Dorsolateral prefrontal cortex (tissue), 120 donors: ENCODE measurements at regions of chr5 and their contacts with region 1.

Region 1: DNA sequence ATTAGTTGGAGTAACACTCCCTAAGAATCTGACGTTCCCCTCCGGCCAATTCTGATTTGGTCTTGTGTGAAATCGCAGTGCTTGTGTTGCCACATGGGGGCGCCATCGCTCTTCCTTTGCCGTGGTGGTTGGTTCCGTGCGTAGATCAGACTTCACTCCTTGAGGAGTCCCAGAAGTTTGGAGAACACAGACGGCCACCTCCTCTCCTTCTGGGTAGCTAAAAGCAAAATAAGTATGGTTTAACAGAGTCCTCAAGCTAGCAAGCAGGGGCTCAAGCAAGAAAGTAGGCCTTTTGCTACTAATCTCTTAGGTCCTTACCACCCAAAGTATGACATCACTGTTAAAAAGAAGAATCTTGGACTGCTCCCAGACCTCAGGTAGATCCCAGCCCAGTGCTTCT is 59.5 kb downstream of the HSPA4 start:
- DNase-seq: peak; percentile 73 to 92 (median 86)
- H3K4me3 ChIP-seq: peak overlapping the region in 1 of 59 donors; percentile 8
- H3K27ac ChIP-seq: no peak overlapping the region
- H3K27me3 ChIP-seq: no peaks in the 10 kb centered on the region
- CTCF ChIP-seq: peak; percentile 85 to 98 (median 93)

Region 2: GRCh38 chr5:133240425-133241091 is 129.3 kb after region 1 on chr5:
- intact Hi-C with region 1: loop called in 1 of 2 experiments (anchors 10 kb)
- DNase-seq: peak in 5 of 10 donors; percentile 41 to 69 (median 58)
- H3K4me3 ChIP-seq: no peak overlapping the region
- H3K27ac ChIP-seq: peak overlapping the region in 26 of 59 donors; percentile 3 to 75 (median 40)
- H3K27me3 ChIP-seq: no peaks in the 10 kb centered on the region
- CTCF ChIP-seq: no peak

Region 3: DNA sequence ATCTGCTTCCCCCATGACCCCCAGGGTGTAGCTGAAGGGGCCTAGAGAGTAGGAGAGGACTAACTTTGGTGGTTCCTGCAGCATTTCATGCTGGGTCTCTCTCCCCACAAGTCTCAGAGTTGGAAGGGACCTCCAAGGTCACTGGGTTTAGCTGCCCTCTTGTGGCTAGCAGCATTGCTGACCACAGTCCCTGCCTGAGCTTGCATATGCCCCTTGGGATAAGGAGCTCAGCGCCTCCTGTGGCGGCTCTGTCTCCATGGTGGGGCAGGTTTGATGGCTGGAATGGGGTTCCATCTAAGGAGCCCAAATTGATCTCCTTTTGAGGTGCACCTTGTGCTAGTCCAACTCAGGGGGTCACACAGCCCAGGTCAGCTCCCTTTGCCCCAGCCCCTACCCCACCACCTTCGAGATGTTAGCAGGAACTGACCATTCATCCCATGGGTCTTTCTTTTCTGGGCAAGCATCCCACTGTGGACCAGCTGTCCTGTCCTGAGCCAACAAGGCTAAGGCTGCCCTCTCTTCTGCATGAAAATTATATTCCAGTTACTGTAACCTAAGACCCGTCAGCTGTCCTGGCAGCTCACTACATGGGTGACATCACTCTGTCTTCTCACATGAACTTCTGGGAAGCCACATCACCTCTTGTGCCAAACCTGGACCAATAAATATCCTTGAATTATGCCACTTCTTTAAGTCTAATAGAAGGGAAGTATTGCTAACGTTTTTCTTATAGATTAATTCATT is 136.8 kb after region 1 on chr5:
- intact Hi-C with region 1: loop called (anchors 2 to 10 kb)
- DNase-seq: peak in 1 of 10 donors; percentile 23
- H3K4me3 ChIP-seq: no peak overlapping the region
- H3K27ac ChIP-seq: peak overlapping the region in 1 of 59 donors; percentile 9
- H3K27me3 ChIP-seq: no peaks in the 10 kb centered on the region
- CTCF ChIP-seq: peak in 47 of 56 donors; percentile 9 to 60 (median 37)

Region 4: GRCh38 chr5:133610489-133611356 is 499.4 kb after region 1 on chr5:
- intact Hi-C with region 1: loop called in 1 of 2 experiments (anchors 5 kb)
- DNase-seq: peak in 9 of 10 donors; percentile 44 to 82 (median 64)
- H3K4me3 ChIP-seq: peak overlapping the region; percentile 37 to 76 (median 61)
- H3K27ac ChIP-seq: peak overlapping the region in 25 of 59 donors; percentile 10 to 80 (median 65)
- H3K27me3 ChIP-seq: peaks cover 0 to 68% (median 17%) of the 10 kb centered on the region in 45 donors
- CTCF ChIP-seq: peak in 55 of 56 donors; percentile 10 to 79 (median 63)

Region 5: DNA sequence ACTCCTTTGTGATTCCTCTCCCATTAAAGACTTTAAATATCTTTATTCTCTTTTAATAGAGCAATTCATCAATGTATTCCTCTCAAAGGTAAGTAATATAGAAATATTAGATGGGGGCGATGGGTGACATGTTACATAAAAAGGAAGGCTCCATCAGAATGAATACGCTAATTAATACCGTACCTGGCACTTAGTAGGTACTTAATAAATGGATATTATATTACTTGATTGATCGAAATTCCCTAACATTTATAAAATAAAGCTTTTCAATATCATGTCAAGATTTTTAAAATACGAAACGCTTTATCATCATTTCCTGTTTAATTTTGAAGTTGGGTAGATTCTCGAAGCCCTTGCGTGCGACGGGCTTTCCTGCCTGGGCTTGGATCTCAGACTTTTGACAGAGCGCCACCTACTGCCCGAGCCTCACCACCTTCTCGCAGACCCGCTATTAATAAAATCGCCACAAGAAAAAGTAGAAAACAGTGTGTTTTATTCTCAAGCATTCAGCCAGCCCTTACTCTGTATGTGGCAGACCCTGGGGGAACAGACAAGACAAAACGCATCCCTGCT is 757.7 kb after region 1 on chr5:
- intact Hi-C with region 1: loop called (anchors 2 to 10 kb)
- DNase-seq: peak; percentile 73 to 83 (median 78)
- H3K4me3 ChIP-seq: peak overlapping the region in 57 of 59 donors; percentile 8 to 68 (median 45)
- H3K27ac ChIP-seq: peak overlapping the region in 37 of 59 donors; percentile 5 to 84 (median 53)
- H3K27me3 ChIP-seq: no peaks in the 10 kb centered on the region
- CTCF ChIP-seq: peak; percentile 55 to 91 (median 82)

Region 6: DNA sequence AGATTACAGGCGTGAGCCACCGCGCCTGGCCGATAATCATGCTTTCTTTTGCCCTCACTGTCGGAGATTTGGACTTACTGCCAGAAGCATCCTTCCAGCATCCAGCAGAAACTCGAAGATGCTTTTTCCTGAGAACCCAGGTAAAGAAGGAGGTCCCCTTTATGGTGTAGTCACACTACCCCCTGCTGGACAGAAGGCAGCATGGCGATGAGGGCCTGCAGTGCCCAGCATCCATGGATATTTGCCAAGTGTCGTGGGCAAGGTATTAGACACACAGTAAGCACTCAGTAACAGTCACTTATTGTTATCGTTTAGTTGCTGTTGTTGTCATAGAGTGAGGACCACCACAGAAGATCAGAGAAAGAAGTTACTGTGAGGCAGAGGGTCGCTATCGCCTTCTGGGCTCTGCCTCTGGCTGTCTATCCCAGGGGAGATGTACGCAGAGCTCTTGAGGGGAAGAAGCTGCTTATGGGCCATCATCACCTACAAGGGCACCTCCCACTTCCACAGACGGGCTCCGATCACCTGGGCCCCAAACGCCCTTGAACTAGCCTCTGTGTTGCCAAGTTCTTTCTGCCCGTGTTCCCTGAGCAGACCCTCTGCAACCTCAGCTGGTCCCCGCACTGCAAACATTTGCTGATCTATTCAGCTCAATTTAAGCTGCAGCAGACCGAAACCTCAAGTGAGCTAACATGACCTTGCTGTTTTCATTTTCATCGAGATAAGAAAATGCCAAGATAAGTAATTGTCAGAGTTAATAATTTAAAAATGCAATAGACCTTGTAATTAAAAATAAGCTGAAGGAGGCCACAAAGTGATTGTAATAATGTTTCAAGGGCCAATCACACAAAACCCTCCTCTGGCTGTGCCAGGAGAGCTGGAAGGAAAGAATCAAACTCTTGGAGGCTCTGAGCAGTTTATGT is 833.2 kb after region 1 on chr5:
- intact Hi-C with region 1: loop called in 1 of 2 experiments (anchors 5 kb)
- DNase-seq: peak in 6 of 10 donors; percentile 43 to 63 (median 53)
- H3K4me3 ChIP-seq: no peak overlapping the region
- H3K27ac ChIP-seq: peak overlapping the region in 14 of 59 donors; percentile 10 to 74 (median 44)
- H3K27me3 ChIP-seq: no peaks in the 10 kb centered on the region
- CTCF ChIP-seq: peak; percentile 41 to 80 (median 71)